ENCODE measurements at regions of chr5 and their contacts with region 1.

Region 1: DNA sequence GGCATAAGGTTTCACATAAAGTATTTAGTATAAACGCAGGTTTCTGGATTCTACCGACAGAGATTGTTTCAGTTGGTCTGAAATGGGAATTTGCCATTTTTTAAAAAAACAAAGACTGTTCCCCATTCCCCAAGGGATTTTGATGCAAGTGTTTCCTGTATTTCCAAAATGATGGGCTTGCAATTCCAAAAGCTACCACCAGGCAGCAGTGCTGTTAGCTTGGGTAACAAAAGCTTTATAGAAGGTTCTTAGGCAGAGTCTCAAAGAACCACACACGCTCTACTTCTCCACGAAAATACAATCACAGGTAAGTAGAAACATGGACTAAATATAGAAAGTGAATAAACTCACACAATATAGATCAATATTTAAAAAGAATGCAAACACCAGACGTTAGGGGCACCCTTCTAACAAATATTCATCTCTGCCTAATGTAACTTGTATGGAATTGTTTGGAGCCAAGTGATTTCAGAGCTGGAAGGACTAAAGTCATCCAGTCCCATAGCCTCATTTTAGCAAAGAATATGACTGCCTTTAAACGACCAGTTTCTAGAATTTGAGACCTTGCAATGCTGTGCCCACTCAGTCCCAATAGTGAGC is 154.3 kb downstream of the SPOCK1 start:
- DNase-seq: peak; percentile 53
- ATAC-seq: no peak
- H3K4me3 Mint-ChIP-seq: no peak overlapping the region
- H3K27ac Mint-ChIP-seq: no peak overlapping the region
- H3K4me1 Mint-ChIP-seq: no peaks in the 10 kb centered on the region
- H3K27me3 Mint-ChIP-seq: no peaks in the 10 kb centered on the region
- CTCF ChIP-seq: peak; percentile 88

Region 2: GRCh38 chr5:137498736-137499505 is 154.1 kb after region 1 on chr5 and contains the start of gene SPOCK1:
- CTCF ChIA-PET with region 1: interaction called, 4 read pairs
- POLR2A ChIA-PET with region 1: no interaction called
- intact Hi-C with region 1: loop called (anchors 2 kb)
- DNase-seq: peak; percentile 70
- ATAC-seq: peak; percentile 95
- H3K4me3 Mint-ChIP-seq: no peak within 1 kb of the TSS
- H3K27ac Mint-ChIP-seq: no peak within 1 kb of the TSS
- H3K4me1 Mint-ChIP-seq: no peaks in the 10 kb centered on the region
- H3K27me3 Mint-ChIP-seq: peaks cover 18% of the 10 kb centered on the region
- CTCF ChIP-seq: peak; percentile 73
- total RNA-seq, gene SPOCK1: not detected

Measured in activated CD8-positive, alpha-beta T cell treated with anti-CD3 and anti-CD28 coated beads for 36 hours (primary cell).